PC-3 (cell line): ENCODE measurements at regions of chr1 and their contacts with region 1.

Region 1: DNA sequence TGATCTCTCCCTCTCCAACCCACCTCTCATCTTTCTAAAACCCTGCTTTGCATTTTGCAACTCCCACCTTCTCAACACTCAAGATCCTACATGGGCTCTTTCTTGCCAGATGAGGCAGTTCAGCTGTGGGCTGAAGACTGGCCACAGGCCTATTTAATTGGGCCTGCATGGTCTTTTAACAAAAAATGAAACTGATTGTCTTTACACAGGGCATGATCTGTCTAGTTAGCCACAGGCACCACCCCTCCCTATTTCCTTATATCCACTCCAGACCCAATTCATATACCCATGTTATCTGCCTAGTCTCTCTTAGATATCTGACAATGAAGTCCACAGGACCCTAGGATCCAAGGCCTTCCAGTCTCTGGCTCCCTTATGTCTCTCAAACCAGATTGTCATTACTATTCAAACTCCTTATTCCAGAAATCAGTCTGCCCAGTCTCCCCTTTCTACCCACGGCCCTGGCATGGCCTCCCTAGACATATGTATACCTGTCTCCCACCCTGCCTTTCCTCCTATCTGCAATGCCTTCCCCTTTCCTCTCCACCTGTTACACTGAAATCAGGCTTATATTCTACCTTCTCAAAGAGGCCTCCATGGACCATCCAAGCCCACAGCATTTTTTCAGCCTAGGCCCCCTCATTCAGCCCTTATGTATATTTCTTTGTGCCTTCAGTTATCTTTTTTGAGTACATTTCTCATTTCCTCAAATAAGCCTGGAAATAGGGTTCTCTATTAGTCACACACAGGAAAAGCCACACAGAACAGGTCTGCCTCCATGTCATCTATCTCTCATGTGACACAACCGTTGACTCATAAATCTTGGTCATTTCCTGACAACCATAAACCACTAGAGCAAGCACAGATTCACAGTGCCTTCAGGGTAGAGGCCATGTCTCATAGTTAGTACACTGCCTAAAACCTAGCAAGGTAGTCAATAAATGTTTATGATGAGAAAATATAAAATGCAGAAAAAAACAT is 39.0 kb downstream of the LPAR3 start:
- DNase-seq: peak; percentile 97
- ATAC-seq: peak; percentile 92
- H3K4me3 ChIP-seq: no peak overlapping the region
- H3K27ac ChIP-seq: peak overlapping the region; percentile 96
- H3K4me1 ChIP-seq: peaks cover 56% of the 10 kb centered on the region
- H3K27me3 ChIP-seq: no peaks in the 10 kb centered on the region
- CTCF ChIP-seq: no peak

Region 2: DNA sequence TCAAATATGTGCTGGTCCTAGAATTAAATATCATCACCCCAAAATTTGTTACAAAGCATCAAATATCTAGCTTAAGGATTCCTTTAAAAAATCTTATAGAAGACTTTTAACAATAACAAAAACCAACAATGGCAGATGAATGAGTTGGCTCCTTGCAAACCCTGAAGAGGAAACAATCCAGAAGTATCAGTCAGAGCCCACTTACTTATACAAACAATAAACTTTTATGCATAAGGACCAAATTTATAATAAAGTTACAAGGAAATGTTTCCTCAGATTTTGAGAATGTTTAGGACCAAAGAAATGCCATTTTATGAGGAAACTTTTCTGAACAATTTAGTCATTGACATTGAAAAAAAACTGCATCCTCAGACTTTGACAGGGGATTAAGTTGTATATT is 13.7 kb before region 1 on chr1:
- CTCF ChIA-PET with region 1: no interaction called
- POLR2A ChIA-PET with region 1: interaction called, 10 read pairs
- intact Hi-C with region 1: no loop called
- DNase-seq: peak; percentile 65
- ATAC-seq: peak; percentile 45
- H3K4me3 ChIP-seq: no peak overlapping the region
- H3K27ac ChIP-seq: peak overlapping the region; percentile 59
- H3K4me1 ChIP-seq: peaks cover 36% of the 10 kb centered on the region
- H3K27me3 ChIP-seq: no peaks in the 10 kb centered on the region
- CTCF ChIP-seq: no peak

Region 3: GRCh38 chr1:85366391-85367170 is 512.5 kb after region 1 on chr1:
- CTCF ChIA-PET with region 1: no interaction called
- POLR2A ChIA-PET with region 1: no interaction called
- intact Hi-C with region 1: no loop called
- DNase-seq: peak; percentile 75
- ATAC-seq: peak; percentile 37; the same call in 1 of the 2 replicates
- H3K4me3 ChIP-seq: no peak overlapping the region
- H3K27ac ChIP-seq: peak overlapping the region; percentile 12
- H3K4me1 ChIP-seq: peaks cover 48% of the 10 kb centered on the region
- H3K27me3 ChIP-seq: no peaks in the 10 kb centered on the region
- CTCF ChIP-seq: no peak